Endothelial cell of umbilical vein (primary cell): ENCODE measurements at regions of chr1 and their contacts with region 1.

Region 1: GRCh38 chr1:44213222-44214112 is at the start of gene DMAP1:
- DNase-seq: peak; percentile 81
- H3K4me3 ChIP-seq: peak within 1 kb of the TSS; percentile 64 to 82 (median 76)
- H3K27ac ChIP-seq: no peak within 1 kb of the TSS
- H3K4me1 ChIP-seq: peaks cover 13% of the 10 kb centered on the region
- H3K27me3 ChIP-seq: no peaks in the 10 kb centered on the region
- CTCF ChIP-seq: no peak
- POLR2A ChIP-seq: peak; percentile 69
- total RNA-seq, gene DMAP1: 40.9 and 42.9 TPM in 2 replicates

Region 2: GRCh38 chr1:44227211-44227610 is 13.7 kb after region 1 on chr1:
- CTCF ChIA-PET with region 1: interaction called, 30 read pairs
- POLR2A ChIA-PET with region 1: interaction called, 3 read pairs
- dilution Hi-C with region 1: no loop called
- intact Hi-C with region 1: no loop called
- DNase-seq: no peak
- H3K4me3 ChIP-seq: no peak overlapping the region
- H3K27ac ChIP-seq: no peak overlapping the region
- H3K4me1 ChIP-seq: no peaks in the 10 kb centered on the region
- H3K27me3 ChIP-seq: no peaks in the 10 kb centered on the region
- CTCF ChIP-seq: no peak
- POLR2A ChIP-seq: no peak

Region 3: DNA sequence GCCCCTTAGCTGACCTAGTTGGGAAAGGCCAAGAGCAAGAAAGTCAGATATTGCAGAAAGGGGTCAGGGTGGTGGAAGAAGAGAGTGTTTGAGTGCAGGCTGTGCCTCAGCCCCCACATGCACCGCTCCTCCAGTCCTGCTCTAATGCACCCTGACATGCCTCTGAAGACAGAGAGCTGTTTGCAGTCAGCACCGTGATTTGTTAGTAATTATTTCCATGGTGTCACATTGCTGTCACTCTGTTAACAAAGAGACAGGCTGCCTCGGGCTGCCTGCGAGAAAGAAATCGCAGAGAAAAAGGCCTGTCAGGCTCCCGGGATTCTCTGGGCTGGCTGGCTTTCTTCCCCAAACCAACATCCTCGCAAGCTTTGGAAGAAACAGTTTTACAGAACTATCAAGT is 83.3 kb after region 1 on chr1:
- CTCF ChIA-PET with region 1: interaction called, 14 read pairs
- POLR2A ChIA-PET with region 1: no interaction called
- dilution Hi-C with region 1: no loop called
- intact Hi-C with region 1: no loop called
- DNase-seq: no peak
- H3K4me3 ChIP-seq: no peak overlapping the region
- H3K27ac ChIP-seq: no peak overlapping the region
- H3K4me1 ChIP-seq: no peaks in the 10 kb centered on the region
- H3K27me3 ChIP-seq: no peaks in the 10 kb centered on the region
- CTCF ChIP-seq: no peak
- POLR2A ChIP-seq: no peak

Region 4: GRCh38 chr1:44500181-44501046 is 286.9 kb after region 1 on chr1:
- CTCF ChIA-PET with region 1: interaction called, 6 read pairs
- POLR2A ChIA-PET with region 1: no interaction called
- dilution Hi-C with region 1: no loop called
- intact Hi-C with region 1: loop called (anchors 1 kb)
- DNase-seq: peak; percentile 59
- H3K4me3 ChIP-seq: no peak overlapping the region
- H3K27ac ChIP-seq: no peak overlapping the region
- H3K4me1 ChIP-seq: no peaks in the 10 kb centered on the region
- H3K27me3 ChIP-seq: peaks cover 26 to 29% of the 10 kb centered on the region in 2 experiments
- CTCF ChIP-seq: peak in 1 of 2 donors; percentile 48
- POLR2A ChIP-seq: no peak

Region 5: GRCh38 chr1:44652445-44653106 is 439.1 kb after region 1 on chr1:
- CTCF ChIA-PET with region 1: interaction called, 23 read pairs
- POLR2A ChIA-PET with region 1: no interaction called
- dilution Hi-C with region 1: no loop called
- intact Hi-C with region 1: loop called (anchors 2 kb)
- DNase-seq: peak; percentile 72
- H3K4me3 ChIP-seq: no peak overlapping the region
- H3K27ac ChIP-seq: no peak overlapping the region
- H3K4me1 ChIP-seq: no peaks in the 10 kb centered on the region
- H3K27me3 ChIP-seq: no peaks in the 10 kb centered on the region
- CTCF ChIP-seq: peak; percentile 92 to 94
- POLR2A ChIP-seq: no peak